Activated naive CD4-positive, alpha-beta T cell treated with anti-CD3 and anti-CD28 coated beads for 36 hours (primary cell): ENCODE measurements at regions of chr15 and their contacts with region 1.

Region 1: GRCh38 chr15:82540055-82540983 is at the start of gene RPS17:
- DNase-seq: peak; percentile 96
- H3K4me3 Mint-ChIP-seq: peak within 1 kb of the TSS; percentile 85
- H3K27ac Mint-ChIP-seq: peak within 1 kb of the TSS; percentile 96
- H3K4me1 Mint-ChIP-seq: peaks cover 34% of the 10 kb centered on the region
- H3K27me3 Mint-ChIP-seq: no peaks in the 10 kb centered on the region
- total RNA-seq, gene RPS17: 3,025 to 3,069 TPM

Region 2: DNA sequence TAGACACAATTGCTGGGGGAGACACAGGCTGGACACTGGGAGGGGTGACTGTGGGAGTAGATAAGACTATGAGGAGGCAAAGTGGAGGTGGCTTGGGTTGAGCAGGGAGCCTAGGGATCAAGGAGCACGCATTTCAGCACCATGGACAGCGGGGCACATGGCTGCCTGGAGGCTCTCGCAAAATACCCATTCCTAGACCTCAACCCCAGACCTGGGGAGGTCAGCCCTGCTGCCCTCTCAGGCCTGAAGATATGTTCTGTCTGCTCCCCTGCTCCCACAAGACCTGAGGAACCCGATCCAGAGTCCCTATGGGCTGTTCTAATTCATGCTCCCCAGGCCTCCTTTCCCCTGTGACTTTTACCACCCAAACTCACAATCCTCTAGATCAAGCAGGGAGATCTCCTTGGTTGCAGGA is 122.9 kb after region 1 on chr15:
- CTCF ChIA-PET with region 1: no interaction called
- intact Hi-C with region 1: no loop called
- DNase-seq: peak; percentile 69
- H3K4me3 Mint-ChIP-seq: no peak overlapping the region
- H3K27ac Mint-ChIP-seq: no peak overlapping the region
- H3K4me1 Mint-ChIP-seq: no peaks in the 10 kb centered on the region
- H3K27me3 Mint-ChIP-seq: peaks cover 6% of the 10 kb centered on the region

Region 3: DNA sequence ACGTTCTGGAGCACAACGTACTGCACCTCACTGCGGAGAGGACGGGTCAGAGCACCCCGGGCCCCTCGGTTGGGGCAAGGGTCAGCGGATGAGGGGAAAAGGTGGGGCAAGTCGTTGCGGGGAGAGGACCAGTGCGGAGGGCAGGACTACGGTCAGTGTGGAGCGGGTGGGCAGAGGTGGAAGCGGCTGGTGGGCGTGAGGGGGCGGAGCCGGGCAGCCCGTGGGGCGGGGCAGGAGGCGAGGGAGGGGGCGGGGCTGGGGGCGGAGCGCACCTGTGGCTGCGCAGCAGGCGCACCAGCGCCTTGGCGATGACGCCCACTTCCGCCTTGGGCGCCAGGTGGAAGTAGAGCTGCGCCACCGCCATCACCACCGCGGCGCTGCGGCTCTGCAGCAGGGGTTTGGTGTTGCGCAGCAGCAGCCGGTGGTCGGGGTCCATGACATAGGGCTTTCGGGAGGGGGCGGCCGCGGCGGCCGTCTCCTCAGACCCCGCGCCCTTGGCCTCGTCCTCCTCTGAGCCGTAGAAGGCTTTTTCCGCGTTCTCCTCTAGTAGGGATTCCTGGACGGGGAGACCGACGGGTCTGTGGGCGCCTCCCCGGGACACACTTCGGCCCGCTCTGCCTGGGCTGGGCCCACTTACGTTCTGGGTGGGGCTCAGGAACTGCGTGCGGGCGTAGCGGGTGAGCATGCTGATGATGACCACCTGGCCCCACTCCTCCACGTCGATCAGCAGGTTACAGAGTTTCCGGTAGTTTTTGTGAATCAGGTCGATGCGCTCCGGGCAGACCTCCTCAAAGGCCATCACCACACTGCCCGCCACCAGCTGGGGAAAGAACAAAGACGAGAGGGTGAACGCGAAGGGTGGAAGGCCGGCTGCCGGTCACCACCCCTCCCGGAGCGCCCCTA is 140.1 kb after region 1 on chr15:
- CTCF ChIA-PET with region 1: interaction called, 3 read pairs
- intact Hi-C with region 1: loop called (anchors 1 kb)
- DNase-seq: peak; percentile 86
- H3K4me3 Mint-ChIP-seq: peak overlapping the region; percentile 88
- H3K27ac Mint-ChIP-seq: peak overlapping the region; percentile 47
- H3K4me1 Mint-ChIP-seq: peaks cover 7% of the 10 kb centered on the region
- H3K27me3 Mint-ChIP-seq: peaks cover 2% of the 10 kb centered on the region